ENCODE measurements at regions of chr20 and their contacts with region 1.

Region 1: GRCh38 chr20:35368666-35369423 is 42.9 kb downstream of the UQCC1 start:
- DNase-seq: no peak
- ATAC-seq: no peak
- H3K4me3 ChIP-seq: no peak overlapping the region
- H3K4me3 Mint-ChIP-seq: no peak overlapping the region
- H3K27ac ChIP-seq: no peak overlapping the region
- H3K27ac Mint-ChIP-seq: no peak overlapping the region
- H3K4me1 ChIP-seq: no peaks in the 10 kb centered on the region
- H3K4me1 Mint-ChIP-seq: peaks cover 0 to 3% (median 0%) of the 10 kb centered on the region in 3 donors
- H3K27me3 ChIP-seq: no peaks in the 10 kb centered on the region
- H3K27me3 Mint-ChIP-seq: no peaks in the 10 kb centered on the region

Region 2: DNA sequence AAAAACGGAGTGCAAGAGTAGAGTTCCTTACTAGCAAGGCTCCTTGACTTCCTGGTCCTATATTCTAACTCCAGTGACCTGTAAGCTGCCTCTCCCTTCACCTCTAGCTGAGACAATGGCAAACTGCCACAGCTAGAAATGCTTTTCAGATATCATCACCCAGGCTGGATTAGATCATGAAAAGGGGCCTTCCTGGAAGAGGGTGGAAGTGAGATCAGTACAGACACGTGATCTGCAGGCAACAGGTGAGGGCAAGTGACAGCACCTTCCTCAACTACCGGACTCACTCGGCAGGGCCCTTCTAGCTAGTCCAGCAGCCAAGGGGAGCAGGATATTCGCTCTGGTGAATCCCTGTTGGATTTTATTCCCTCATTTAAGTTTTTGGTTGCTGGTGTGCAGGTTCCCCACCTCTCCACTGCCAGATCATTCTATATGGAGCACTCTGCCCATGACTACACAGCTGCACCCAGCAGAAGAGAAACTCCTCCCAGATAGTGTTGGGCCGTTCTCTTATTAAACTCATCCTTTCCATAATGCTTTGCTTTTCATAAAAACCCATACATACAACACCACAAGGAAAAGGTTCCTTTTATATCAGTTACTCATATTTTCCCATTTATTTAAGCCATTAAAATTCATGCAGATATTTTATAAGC is 50.2 kb before region 1 on chr20:
- CTCF ChIA-PET with region 1: no interaction called
- POLR2A ChIA-PET with region 1: interaction called in 1 of 2 experiments, 13 read pairs
- DNase-seq: no peak
- ATAC-seq: no peak
- H3K4me3 ChIP-seq: no peak overlapping the region
- H3K4me3 Mint-ChIP-seq: no peak overlapping the region
- H3K27ac ChIP-seq: no peak overlapping the region
- H3K27ac Mint-ChIP-seq: no peak overlapping the region
- H3K4me1 ChIP-seq: peaks cover 0 to 5% of the 10 kb centered on the region in 2 experiments
- H3K4me1 Mint-ChIP-seq: peaks cover 6 to 15% (median 9%) of the 10 kb centered on the region in 3 donors
- H3K27me3 ChIP-seq: no peaks in the 10 kb centered on the region
- H3K27me3 Mint-ChIP-seq: no peaks in the 10 kb centered on the region